Esophagus muscularis mucosa (tissue), 4 donors: ENCODE measurements at regions of chr19 and their contacts with region 1.

Region 1: DNA sequence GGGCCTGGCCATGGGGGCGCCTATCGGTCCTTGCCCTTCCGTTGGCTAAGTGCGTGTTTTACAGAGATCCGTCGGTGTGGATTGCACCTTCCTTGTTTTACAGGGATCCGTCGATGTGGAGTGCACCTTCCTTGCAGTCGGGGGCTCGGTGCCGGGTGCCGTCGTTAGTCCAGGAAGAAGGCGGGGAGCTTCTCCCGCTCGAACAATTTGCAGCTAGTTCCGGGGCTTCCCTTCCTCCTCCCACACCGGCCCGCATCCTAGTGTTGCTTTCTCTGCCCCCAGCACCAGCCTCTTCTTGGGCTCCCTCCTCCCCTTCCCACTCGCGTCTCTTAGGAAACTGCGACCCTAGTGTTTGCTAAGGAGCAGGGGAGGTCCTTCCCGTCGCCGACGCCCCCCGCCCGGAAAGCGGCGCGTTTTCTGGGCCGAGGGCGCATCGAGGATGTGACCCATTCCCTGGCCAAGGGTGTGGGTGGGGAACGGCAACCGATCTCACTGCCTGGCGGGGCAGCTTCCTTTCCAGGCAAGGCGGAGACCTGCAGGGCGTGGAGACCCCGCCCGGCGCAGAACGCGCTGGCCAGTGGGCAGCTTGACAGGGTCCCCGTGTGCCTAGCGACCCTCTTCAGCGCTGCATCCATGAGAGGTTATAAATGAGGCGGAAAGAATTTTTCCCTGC is 75.7 kb upstream of the ZNF91 start:
- DNase-seq: no peak
- H3K4me3 ChIP-seq: peak overlapping the region in 3 of 4 donors; percentile 10 to 25 (median 24)
- H3K27ac ChIP-seq: no peak overlapping the region
- H3K4me1 ChIP-seq: peaks cover 0 to 8% (median 5%) of the 10 kb centered on the region in 4 donors
- H3K27me3 ChIP-seq: peaks cover 0 to 39% (median 0%) of the 10 kb centered on the region in 4 donors
- CTCF ChIP-seq: no peak
- EP300 ChIP-seq: no peak
- POLR2A ChIP-seq: no peak

Region 2: GRCh38 chr19:23321948-23322549 is 149.0 kb before region 1 on chr19:
- intact Hi-C with region 1: loop called (anchors 2 kb)
- DNase-seq: no peak
- H3K4me3 ChIP-seq: no peak overlapping the region
- H3K27ac ChIP-seq: no peak overlapping the region
- H3K4me1 ChIP-seq: no peaks in the 10 kb centered on the region
- H3K27me3 ChIP-seq: no peaks in the 10 kb centered on the region
- CTCF ChIP-seq: no peak
- EP300 ChIP-seq: no peak
- POLR2A ChIP-seq: no peak